ENCODE measurements at regions of chr18 and their contacts with region 1.

Region 1: GRCh38 chr18:24075731-24076130 is 61.2 kb downstream of the TTC39C start:
- DNase-seq: no peak
- ATAC-seq: no peak
- H3K4me3 ChIP-seq: no peak overlapping the region
- H3K4me3 Mint-ChIP-seq: no peak overlapping the region
- H3K27ac ChIP-seq: no peak overlapping the region
- H3K27ac Mint-ChIP-seq: peak overlapping the region; percentile 82
- H3K4me1 ChIP-seq: peaks cover 12% of the 10 kb centered on the region
- H3K4me1 Mint-ChIP-seq: peaks cover 58% of the 10 kb centered on the region
- H3K27me3 ChIP-seq: no peaks in the 10 kb centered on the region
- H3K27me3 Mint-ChIP-seq: no peaks in the 10 kb centered on the region
- CTCF ChIP-seq: no peak

Region 2: DNA sequence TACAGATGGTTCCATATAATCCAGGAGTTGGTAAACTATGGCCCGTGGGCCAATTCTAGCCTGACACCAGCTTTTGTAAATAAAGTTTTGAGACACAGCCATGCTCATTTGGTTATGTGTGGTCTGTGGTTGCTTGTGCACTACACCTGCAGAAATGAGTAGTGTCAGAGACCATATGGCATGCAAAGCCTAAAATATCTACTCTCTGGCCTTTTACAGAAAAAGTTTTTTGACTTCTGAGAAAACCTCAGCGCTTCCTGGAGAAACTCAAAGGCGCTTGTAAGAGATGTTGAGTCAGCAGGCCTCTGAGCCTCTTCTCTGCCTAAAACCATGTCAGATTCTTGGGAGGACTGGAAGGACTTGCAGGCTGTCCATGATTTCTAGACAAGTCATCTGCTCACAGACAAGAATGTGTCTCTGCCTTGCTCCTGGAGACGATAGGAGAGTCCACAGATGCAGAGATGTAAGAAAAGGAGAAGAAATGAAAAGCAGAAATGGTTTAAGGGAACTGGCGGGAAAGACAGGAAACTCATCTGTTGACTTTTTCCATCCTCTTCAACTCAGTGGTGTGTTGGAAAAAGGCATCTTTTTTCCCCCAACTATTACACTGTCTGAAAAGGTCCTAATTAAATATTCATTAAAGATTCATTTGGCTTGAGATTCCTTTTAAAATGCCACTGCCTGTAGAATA is 55.9 kb before region 1 on chr18:
- CTCF ChIA-PET with region 1: no interaction called
- POLR2A ChIA-PET with region 1: no interaction called
- intact Hi-C with region 1: loop called (anchors 1 to 5 kb)
- DNase-seq: peak in 6 of 9 experiments; percentile 46 to 82 (median 63)
- ATAC-seq: peak; percentile 54
- H3K4me3 ChIP-seq: no peak overlapping the region
- H3K4me3 Mint-ChIP-seq: peak overlapping the region; percentile 62
- H3K27ac ChIP-seq: peak overlapping the region in 1 of 2 experiments; percentile 52
- H3K27ac Mint-ChIP-seq: peak overlapping the region; percentile 90
- H3K4me1 ChIP-seq: peaks cover 82% of the 10 kb centered on the region
- H3K4me1 Mint-ChIP-seq: peaks cover 89% of the 10 kb centered on the region
- H3K27me3 ChIP-seq: no peaks in the 10 kb centered on the region
- H3K27me3 Mint-ChIP-seq: no peaks in the 10 kb centered on the region
- CTCF ChIP-seq: no peak

Region 3: DNA sequence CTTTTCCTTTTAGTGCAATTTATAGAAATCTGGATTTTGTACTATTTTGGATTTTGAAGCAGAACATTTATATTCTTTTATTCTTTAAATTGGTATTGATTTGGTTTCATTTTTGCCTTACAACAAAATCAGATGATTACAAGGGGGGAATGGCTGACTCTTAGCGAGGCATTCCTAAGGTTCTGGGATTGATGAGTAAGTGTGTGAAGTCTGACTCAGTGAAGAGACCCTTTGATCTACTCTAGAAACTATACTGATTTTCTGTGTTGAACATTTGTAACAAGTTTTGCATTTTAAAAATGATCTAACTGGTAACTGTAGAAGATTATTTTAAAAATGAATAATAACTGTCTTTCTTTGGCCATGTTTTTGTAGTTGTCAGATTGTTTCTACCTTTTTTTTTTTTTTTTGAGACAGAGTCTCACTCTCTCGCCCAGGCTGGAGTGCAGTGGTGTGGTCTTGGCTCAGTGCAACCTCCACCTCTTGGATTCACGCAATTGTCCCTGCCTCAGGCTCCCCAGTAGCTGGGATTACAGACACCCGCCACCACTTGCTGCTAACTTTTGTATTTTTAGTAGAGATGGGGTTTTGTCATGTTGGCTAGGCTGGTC is 12.5 kb before region 1 on chr18:
- CTCF ChIA-PET with region 1: interaction called, 5 read pairs
- POLR2A ChIA-PET with region 1: interaction called, 4 read pairs
- intact Hi-C with region 1: loop called in 1 of 2 experiments (anchors 2 kb)
- DNase-seq: no peak
- ATAC-seq: peak; percentile 58
- H3K4me3 ChIP-seq: no peak overlapping the region
- H3K4me3 Mint-ChIP-seq: no peak overlapping the region
- H3K27ac ChIP-seq: no peak overlapping the region
- H3K27ac Mint-ChIP-seq: peak overlapping the region; percentile 22
- H3K4me1 ChIP-seq: no peaks in the 10 kb centered on the region
- H3K4me1 Mint-ChIP-seq: peaks cover 68% of the 10 kb centered on the region
- H3K27me3 ChIP-seq: no peaks in the 10 kb centered on the region
- H3K27me3 Mint-ChIP-seq: no peaks in the 10 kb centered on the region
- CTCF ChIP-seq: no peak

Region 4: DNA sequence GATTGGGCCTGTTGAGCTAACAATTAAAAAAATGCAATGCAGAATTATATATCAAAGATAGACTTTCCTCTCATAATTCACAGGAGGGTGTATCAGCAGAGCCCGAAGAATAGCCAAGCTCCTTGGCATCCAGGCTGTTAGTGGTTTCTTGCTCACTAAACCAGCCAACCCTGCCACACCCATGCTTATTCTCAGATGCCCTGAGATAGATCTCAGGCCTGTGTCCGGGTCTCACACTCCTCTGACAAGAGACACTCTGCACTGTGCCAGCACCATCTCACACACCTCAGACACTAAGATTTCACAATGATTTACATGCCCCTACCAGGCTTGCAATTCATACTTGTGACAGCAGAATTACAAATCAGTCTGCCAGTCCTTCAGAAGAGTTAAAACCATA is 257.3 kb after region 1 on chr18:
- CTCF ChIA-PET with region 1: no interaction called
- POLR2A ChIA-PET with region 1: no interaction called
- intact Hi-C with region 1: no loop called
- DNase-seq: no peak
- ATAC-seq: no peak
- H3K4me3 ChIP-seq: no peak overlapping the region
- H3K4me3 Mint-ChIP-seq: no peak overlapping the region
- H3K27ac ChIP-seq: no peak overlapping the region
- H3K27ac Mint-ChIP-seq: no peak overlapping the region
- H3K4me1 ChIP-seq: no peaks in the 10 kb centered on the region
- H3K4me1 Mint-ChIP-seq: no peaks in the 10 kb centered on the region
- H3K27me3 ChIP-seq: peaks cover 0 to 2% of the 10 kb centered on the region in 2 experiments
- H3K27me3 Mint-ChIP-seq: no peaks in the 10 kb centered on the region
- CTCF ChIP-seq: no peak

Region 5: GRCh38 chr18:24514439-24514838 is 438.7 kb after region 1 on chr18:
- CTCF ChIA-PET with region 1: no interaction called
- POLR2A ChIA-PET with region 1: no interaction called
- intact Hi-C with region 1: no loop called
- DNase-seq: peak in 2 of 9 experiments; percentile 40 to 51
- ATAC-seq: no peak
- H3K4me3 ChIP-seq: no peak overlapping the region
- H3K4me3 Mint-ChIP-seq: no peak overlapping the region
- H3K27ac ChIP-seq: no peak overlapping the region
- H3K27ac Mint-ChIP-seq: no peak overlapping the region
- H3K4me1 ChIP-seq: no peaks in the 10 kb centered on the region
- H3K4me1 Mint-ChIP-seq: no peaks in the 10 kb centered on the region
- H3K27me3 ChIP-seq: no peaks in the 10 kb centered on the region
- H3K27me3 Mint-ChIP-seq: no peaks in the 10 kb centered on the region
- CTCF ChIP-seq: peak; percentile 63